BJ (cell line): ENCODE measurements at regions of chr3 and their contacts with region 1.

Region 1: DNA sequence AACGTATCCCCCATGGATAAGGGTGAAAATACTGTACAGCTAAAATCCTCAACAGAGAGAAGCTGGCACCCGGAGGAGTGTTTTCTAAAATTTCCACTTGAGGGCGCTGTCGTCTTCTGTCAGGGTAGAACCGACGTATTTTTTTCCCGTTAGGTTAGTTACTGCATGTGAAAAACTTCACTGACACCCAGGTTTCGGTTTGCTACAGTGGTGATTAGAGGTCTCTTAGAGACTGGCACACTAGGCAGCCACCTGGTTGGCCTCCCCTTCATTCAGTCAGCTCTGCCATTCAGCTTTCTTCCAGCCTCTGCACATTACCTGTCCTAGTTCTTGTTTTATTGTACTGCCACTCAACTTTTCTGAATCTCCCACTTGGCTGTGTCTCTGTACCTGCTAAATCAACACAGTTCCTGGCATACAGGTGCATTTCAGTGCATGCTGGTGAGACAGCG is 18.4 kb downstream of the CCK start:
- DNase-seq: no peak
- H3K4me3 ChIP-seq: no peak overlapping the region
- H3K27me3 ChIP-seq: peaks cover 10% of the 10 kb centered on the region
- CTCF ChIP-seq: peak; percentile 69

Region 2: DNA sequence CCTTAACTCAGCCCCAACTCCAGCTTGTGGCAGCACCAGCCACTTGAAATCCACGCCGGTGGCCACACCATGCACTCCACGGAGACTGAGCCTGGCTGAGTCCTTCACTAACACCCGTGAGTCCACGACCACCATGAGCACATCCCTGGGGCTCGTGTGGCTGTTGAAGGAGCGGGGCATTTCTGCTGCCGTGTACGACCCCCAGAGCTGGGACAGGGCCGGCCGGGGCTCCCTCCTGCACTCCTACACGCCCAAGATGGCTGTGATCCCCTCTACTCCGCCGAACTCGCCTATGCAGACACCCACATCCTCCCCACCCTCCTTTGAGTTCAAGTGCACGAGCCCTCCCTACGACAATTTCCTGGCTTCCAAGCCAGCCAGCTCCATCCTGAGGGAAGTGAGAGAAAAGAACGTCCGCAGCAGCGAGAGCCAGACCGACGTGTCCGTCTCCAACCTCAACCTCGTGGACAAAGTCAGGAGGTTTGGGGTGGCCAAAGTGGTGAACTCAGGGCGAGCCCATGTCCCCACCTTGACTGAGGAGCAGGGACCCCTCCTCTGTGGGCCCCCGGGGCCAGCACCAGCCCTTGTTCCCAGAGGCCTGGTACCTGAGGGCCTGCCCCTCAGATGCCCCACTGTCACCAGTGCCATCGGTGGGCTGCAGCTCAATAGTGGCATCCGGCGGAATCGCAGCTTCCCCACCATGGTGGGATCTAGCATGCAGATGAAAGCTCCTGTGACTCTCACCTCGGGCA is 24.5 kb before region 1 on chr3:
- CTCF ChIA-PET with region 1: interaction called, 11 read pairs
- POLR2A ChIA-PET with region 1: no interaction called
- DNase-seq: no peak
- H3K4me3 ChIP-seq: no peak overlapping the region
- H3K27me3 ChIP-seq: no peaks in the 10 kb centered on the region
- CTCF ChIP-seq: no peak

Region 3: DNA sequence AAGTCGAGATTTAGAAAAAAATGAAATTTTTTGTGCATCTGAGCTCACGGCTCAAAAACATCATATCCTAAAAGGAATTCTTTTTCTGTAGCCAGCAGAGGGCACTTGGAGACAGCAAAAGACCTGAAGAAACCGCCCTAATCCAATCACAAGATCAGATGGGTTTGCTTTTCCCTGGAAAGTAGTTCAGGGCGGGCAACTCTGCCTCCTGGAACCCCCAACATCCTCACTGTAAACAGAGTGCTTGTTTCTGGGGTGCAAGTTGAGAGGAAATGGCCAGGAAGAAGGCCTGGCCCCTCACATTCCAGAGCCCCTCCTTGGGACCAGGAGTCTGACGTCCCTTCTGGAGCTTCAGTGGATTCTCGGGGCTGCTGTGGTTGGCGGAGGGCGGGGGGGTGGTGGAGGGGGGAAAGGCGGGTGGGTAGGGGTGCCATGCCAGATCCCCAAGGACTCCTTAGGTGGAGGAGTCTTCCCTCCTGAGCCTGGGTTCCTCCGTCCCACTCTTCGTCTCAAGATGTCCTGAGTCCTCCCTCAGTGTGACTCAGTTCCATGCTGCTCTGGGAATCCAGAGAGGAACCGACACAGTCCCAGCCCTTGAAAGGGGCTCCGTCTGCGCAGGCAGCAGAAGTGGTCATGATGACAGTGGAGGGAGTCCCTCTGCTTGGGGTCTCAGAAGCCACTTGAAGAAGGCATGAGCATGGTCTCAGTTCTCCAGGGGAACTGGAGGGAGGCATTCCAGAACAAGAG is 17.5 kb before region 1 on chr3:
- CTCF ChIA-PET with region 1: interaction called, 18 read pairs
- POLR2A ChIA-PET with region 1: no interaction called
- DNase-seq: no peak
- H3K4me3 ChIP-seq: no peak overlapping the region
- H3K27me3 ChIP-seq: no peaks in the 10 kb centered on the region; the same call in 1 of the 2 replicates
- CTCF ChIP-seq: peak; percentile 64

Region 4: DNA sequence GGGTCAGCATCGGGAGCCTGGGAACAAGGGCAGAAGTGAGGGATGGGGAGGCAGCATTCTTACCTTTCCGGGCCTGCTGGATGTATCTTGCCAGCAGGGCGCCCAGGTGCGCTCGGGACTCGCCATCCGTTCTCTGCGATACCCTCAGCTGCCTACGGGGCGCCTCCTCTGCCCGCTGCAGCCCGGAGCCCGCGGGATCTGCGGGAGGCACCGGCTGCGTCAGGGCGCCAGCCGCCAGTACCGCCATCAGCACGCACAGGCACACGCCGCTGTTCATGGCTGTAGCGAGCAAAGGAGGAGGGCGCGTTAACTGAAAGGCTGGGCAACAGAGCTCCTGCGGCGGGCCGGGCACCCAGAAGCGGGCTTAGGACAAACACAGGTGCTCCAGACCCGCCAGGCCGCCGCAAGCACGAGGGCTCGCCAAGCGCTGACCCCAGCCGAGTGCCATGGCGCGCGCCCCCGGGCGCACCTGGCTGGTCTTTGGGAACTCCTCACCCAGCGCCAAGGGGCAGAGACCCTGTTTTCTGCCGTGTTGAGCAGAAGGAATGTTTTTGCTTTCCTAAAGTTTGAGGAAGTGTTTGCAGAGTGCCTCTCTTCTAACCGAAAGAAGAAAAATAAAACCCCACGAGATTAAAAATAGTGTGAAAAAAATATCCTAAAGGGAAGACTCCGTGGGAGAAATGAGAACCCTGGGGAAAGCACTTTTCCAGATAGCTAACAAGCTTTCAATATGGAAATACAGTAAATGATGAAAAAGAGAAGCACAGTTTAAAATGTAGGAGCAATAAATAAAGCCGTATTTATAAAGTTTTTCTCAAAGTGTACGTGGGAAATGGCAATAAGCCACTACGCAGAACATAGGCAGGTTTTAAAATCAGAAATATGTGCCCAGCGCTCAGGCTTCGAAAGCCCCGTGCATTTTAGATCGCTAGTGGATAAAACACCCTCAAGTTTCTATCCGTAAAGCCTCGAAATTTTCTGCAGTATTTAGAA is 16.0 kb after region 1 on chr3:
- CTCF ChIA-PET with region 1: interaction called, 24 read pairs
- POLR2A ChIA-PET with region 1: no interaction called
- DNase-seq: no peak
- H3K4me3 ChIP-seq: peak overlapping the region; percentile 5; the same call in 1 of the 2 replicates
- H3K27me3 ChIP-seq: peaks cover 24% of the 10 kb centered on the region
- CTCF ChIP-seq: no peak

Region 5: DNA sequence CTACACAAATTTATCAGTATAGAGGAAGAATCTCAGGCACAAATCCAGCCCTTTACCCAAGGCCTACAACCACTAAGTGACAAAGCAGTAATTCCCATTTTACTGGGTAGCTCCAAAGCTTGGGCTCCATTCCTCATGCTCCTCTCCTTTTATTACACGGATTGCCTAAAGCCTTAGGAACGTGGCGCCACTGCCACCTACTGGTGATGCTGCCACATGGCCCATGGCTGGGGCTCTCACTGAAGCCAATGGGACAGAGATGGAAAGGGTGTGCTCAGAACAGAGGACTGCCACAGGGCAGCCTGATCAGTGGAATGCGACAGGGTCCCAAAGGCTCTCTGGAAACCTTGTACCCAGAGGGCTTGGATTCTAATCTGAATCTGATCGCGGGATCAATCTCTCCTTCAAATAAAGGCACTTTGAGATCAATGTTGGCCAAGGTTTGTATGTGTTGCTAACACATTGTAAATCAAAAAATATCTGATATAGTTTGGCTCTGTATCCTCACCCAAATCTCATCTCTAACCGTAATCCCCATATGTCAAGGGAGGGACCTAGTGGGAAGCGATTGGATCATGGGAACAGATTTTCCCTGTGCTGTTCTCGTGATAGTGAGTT is 196.3 kb after region 1 on chr3:
- CTCF ChIA-PET with region 1: interaction called, 122 read pairs
- POLR2A ChIA-PET with region 1: no interaction called
- DNase-seq: peak; percentile 3
- H3K4me3 ChIP-seq: no peak overlapping the region
- H3K27me3 ChIP-seq: peaks cover 6% of the 10 kb centered on the region
- CTCF ChIP-seq: peak; percentile 96

Region 6: DNA sequence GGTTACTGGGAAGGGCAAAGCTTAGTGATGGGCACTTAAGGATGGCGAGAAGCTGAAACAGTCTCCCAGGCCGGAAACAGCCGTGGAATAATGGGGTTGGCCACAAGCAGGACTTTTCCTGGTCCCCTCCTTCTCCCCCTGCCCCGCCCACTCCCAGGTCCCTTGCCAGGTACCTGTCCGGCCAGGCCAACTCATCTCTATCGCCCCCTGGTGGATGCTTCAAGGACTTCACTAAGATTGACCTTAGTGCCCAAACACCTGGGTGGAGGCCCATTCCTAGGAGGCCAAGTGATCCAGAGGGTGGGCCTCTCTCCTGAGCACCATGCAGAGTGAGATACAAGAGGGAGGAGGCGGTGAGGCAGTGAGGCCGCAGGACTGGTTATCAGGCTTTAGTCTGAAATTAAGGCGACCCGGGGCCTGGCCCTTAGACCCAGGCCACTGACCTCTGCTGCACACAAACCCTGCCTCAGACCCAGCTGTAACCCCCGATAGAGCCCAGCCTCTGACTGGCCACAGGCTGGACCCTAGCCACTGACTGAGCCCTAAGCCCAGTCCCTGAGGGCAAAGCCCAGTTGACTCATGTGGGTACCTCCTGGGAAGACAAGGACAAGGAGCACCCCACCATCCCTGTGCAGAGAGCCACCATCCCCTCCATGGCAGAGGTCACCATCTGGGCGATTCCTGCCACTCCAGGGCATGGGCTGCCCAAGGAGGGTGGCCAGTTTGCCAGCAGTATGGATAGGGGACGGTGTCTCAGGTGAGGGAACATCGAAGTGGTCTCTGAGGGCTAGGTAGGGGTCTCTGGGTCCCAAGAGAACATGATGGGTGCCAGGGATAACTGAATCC is 292.5 kb after region 1 on chr3:
- CTCF ChIA-PET with region 1: interaction called, 32 read pairs
- POLR2A ChIA-PET with region 1: no interaction called
- DNase-seq: no peak
- H3K4me3 ChIP-seq: no peak overlapping the region
- H3K27me3 ChIP-seq: no peaks in the 10 kb centered on the region
- CTCF ChIP-seq: peak; percentile 73

Region 7: DNA sequence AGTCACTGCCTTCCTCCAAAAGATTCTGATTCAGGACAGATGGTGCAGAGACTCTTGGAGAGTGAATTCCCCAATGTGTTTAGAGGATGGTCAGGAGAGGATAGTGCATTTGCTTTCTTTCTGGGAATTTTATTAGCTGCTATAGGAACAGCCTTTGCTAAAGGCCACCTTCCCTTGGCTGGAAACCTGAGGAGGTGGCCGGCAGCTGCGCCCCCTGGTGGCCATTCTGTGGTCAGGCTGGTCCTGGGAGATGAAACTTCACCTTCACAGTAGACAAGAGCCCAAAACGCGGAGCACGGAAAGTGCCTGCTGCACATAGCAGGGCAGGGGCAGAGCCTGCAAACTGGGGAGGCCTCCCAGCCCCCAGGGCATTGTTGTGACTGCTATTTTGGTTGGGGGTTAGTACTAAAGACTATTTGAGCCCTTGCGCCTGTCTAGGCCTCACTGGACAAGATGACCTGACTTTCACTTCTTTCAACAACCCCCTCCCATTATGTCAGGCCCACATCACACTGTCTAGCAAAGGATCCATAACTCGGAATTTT is 299.9 kb after region 1 on chr3:
- CTCF ChIA-PET with region 1: interaction called, 32 read pairs
- POLR2A ChIA-PET with region 1: no interaction called
- DNase-seq: peak; percentile 4
- H3K4me3 ChIP-seq: no peak overlapping the region
- H3K27me3 ChIP-seq: no peaks in the 10 kb centered on the region
- CTCF ChIP-seq: peak; percentile 99